Heart right ventricle (tissue), 16 donors: ENCODE measurements at regions of chr5 and their contacts with region 1.

Region 1: DNA sequence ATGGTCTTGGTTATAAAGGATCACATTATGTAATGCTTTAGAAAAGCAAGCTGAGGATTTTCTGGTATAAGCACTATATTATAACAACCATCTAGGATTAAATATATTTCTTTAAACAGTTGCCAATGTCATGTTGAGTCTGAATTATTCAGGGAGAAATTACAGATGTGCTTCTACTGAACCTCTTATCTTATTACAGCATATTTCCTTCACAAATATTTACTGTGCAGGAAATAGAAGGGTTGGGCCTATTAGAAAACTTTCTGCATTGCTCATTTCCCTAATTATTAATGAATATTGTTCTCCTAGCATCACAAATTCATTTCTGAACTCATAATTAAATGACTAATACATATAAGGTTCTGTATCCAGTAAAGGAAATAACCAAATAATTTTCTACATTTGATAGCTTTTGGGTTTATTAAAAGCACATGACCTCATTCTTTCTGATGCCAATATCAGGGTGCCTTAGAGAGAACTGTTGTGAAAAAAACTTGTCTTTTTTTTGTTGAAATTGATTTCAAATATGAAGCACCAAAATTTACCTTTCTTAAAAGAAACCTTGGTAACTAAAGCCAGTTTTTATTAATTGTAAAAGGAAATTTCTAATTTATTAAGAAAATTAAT is 476.8 kb upstream of the PTGER4 start:
- DNase-seq: no peak
- ATAC-seq: peak; percentile 58 to 85 (median 70)
- H3K4me3 ChIP-seq: no peak overlapping the region
- H3K27ac ChIP-seq: peak overlapping the region in 8 of 10 donors; percentile 33 to 75 (median 63)
- H3K4me1 ChIP-seq: peaks cover 0 to 27% (median 15%) of the 10 kb centered on the region in 9 donors
- H3K27me3 ChIP-seq: no peaks in the 10 kb centered on the region
- CTCF ChIP-seq: no peak

Region 2: GRCh38 chr5:40150896-40151295 is 52.0 kb before region 1 on chr5:
- intact Hi-C with region 1: no loop called
- DNase-seq: no peak
- ATAC-seq: no peak
- H3K4me3 ChIP-seq: no peak overlapping the region
- H3K27ac ChIP-seq: no peak overlapping the region
- H3K4me1 ChIP-seq: no peaks in the 10 kb centered on the region
- H3K27me3 ChIP-seq: no peaks in the 10 kb centered on the region
- CTCF ChIP-seq: no peak

Region 3: GRCh38 chr5:40333459-40334244 is 130.7 kb after region 1 on chr5:
- intact Hi-C with region 1: loop called in 1 of 10 experiments (anchors 5 kb)
- DNase-seq: no peak
- ATAC-seq: peak in 5 of 8 donors; percentile 41 to 83 (median 74)
- H3K4me3 ChIP-seq: no peak overlapping the region
- H3K27ac ChIP-seq: peak overlapping the region in 3 of 10 donors; percentile 11 to 46 (median 40)
- H3K4me1 ChIP-seq: peaks cover 0 to 9% (median 0%) of the 10 kb centered on the region in 9 donors
- H3K27me3 ChIP-seq: no peaks in the 10 kb centered on the region
- CTCF ChIP-seq: no peak

Region 4: GRCh38 chr5:40404613-40405012 is 201.7 kb after region 1 on chr5:
- intact Hi-C with region 1: loop called in 1 of 10 experiments (anchors 10 kb)
- DNase-seq: no peak
- ATAC-seq: no peak
- H3K4me3 ChIP-seq: no peak overlapping the region
- H3K27ac ChIP-seq: peak overlapping the region in 4 of 10 donors; percentile 9 to 88 (median 54)
- H3K4me1 ChIP-seq: peaks cover 5 to 66% (median 34%) of the 10 kb centered on the region in 9 donors
- H3K27me3 ChIP-seq: no peaks in the 10 kb centered on the region
- CTCF ChIP-seq: no peak

Region 5: GRCh38 chr5:40627706-40628105 is 424.8 kb after region 1 on chr5:
- intact Hi-C with region 1: loop called in 1 of 10 experiments (anchors 10 kb)
- DNase-seq: no peak
- ATAC-seq: no peak
- H3K4me3 ChIP-seq: no peak overlapping the region
- H3K27ac ChIP-seq: no peak overlapping the region
- H3K4me1 ChIP-seq: peaks cover 0 to 25% (median 0%) of the 10 kb centered on the region in 9 donors
- H3K27me3 ChIP-seq: no peaks in the 10 kb centered on the region
- CTCF ChIP-seq: no peak